ENCODE measurements at regions of chr5 and their contacts with region 1.

Region 1: GRCh38 chr5:31664566-31664965 is 25.6 kb downstream of the PDZD2 start:
- DNase-seq: no peak
- H3K4me3 ChIP-seq: no peak overlapping the region
- H3K27ac ChIP-seq: peak overlapping the region; percentile 79 to 82
- H3K4me1 ChIP-seq: peaks cover 4 to 12% of the 10 kb centered on the region in 2 donors
- H3K27me3 ChIP-seq: no peaks in the 10 kb centered on the region
- CTCF ChIP-seq: no peak

Region 2: GRCh38 chr5:31707329-31707728 is 42.8 kb after region 1 on chr5:
- intact Hi-C with region 1: no loop called
- DNase-seq: no peak
- H3K4me3 ChIP-seq: no peak overlapping the region
- H3K27ac ChIP-seq: no peak overlapping the region
- H3K4me1 ChIP-seq: no peaks in the 10 kb centered on the region
- H3K27me3 ChIP-seq: no peaks in the 10 kb centered on the region
- CTCF ChIP-seq: no peak

Region 3: DNA sequence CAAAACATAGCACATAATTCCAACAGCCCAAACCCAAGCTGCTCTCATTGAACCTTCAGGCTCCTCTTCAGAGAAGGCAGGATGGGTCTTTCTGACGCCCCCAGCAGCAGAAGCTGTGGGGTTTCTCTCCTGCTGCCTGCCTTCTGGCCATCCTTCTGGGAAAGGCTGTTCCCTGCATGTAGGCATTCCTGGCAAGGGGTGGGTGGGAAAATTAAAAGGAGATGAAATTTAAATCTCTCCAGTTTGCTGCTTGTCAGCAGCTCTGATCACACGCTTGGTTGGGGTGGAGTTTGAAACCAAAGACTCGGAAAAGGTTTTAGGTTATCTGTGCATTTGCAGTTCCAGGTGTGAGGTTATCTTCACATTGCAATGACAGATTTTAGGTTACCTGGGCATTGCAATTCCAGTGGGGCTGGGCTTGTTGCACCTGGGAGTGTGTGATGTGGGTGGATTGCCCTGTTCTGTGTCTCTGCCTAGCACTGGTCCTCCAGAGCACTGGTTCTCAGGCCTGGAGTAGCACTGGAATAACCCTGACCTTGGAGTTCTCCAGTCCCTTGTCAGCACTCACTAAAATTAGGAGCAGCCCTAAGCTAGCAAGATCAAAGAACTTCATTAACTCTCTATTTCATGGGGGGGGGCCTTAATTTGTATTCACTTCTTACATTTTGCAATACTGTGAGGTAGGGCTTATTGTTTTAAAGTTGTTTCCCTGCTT is 84.0 kb after region 1 on chr5:
- intact Hi-C with region 1: loop called (anchors 5 kb)
- DNase-seq: no peak
- H3K4me3 ChIP-seq: no peak overlapping the region
- H3K27ac ChIP-seq: no peak overlapping the region
- H3K4me1 ChIP-seq: peaks cover 0 to 9% of the 10 kb centered on the region in 2 donors
- H3K27me3 ChIP-seq: no peaks in the 10 kb centered on the region
- CTCF ChIP-seq: no peak

Region 4: GRCh38 chr5:31770998-31771397 is 106.4 kb after region 1 on chr5:
- intact Hi-C with region 1: loop called (anchors 10 kb)
- DNase-seq: no peak
- H3K4me3 ChIP-seq: no peak overlapping the region
- H3K27ac ChIP-seq: no peak overlapping the region
- H3K4me1 ChIP-seq: peaks cover 0 to 5% of the 10 kb centered on the region in 2 donors
- H3K27me3 ChIP-seq: no peaks in the 10 kb centered on the region
- CTCF ChIP-seq: no peak